ENCODE measurements at regions of chr19 and their contacts with region 1.

Region 1: DNA sequence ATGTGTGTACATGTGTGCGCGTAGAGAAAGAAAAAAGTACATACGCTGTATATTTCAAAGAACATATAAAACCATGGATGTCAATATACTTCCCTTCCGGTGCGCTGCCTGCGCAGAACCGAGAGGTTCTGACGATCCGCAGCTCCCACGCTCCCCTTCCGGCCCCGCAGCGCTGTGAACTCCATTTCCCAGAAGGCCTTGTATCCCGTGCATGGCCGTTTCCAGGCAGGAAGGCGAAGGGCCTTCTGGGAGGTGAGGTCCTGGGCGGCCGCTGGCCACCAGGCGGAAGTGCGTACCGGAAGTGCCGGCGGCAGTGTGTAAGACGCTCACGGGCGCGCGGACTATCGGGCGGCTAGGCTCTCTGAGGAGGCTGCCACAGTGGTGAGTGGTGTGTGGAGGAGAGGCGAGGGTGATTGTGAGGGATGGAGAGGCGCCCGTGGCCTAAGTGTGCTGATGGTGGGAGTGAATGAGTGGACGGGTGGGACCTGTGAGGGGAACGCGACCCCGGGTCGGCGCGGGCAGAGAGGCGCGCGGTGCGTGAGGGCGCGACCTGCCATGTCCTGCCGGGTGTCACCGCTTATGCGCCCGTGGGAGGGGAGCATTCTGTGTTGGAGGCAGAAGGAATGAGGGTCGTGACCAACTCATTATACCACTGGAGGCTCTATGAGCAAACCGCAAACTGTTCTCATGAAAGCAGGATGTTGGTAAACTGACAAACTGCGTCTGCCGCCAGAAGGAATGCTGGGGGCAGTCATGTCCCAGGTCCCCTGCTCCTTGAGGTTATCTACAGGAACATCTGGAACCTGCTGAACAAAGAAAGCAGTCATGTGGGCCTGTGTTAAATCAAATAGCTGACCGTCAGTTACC is at the start of gene ERVK3-1:
- DNase-seq: peak; percentile 97 to 98
- H3K4me3 ChIP-seq: peak within 1 kb of the TSS; percentile 78 to 91
- H3K27ac ChIP-seq: peak within 1 kb of the TSS; percentile 81 to 93
- H3K4me1 ChIP-seq: peaks cover 0 to 19% (median 10%) of the 10 kb centered on the region in 4 donors
- H3K27me3 ChIP-seq: no peaks in the 10 kb centered on the region
- CTCF ChIP-seq: peak; percentile 37 to 63

Region 2: DNA sequence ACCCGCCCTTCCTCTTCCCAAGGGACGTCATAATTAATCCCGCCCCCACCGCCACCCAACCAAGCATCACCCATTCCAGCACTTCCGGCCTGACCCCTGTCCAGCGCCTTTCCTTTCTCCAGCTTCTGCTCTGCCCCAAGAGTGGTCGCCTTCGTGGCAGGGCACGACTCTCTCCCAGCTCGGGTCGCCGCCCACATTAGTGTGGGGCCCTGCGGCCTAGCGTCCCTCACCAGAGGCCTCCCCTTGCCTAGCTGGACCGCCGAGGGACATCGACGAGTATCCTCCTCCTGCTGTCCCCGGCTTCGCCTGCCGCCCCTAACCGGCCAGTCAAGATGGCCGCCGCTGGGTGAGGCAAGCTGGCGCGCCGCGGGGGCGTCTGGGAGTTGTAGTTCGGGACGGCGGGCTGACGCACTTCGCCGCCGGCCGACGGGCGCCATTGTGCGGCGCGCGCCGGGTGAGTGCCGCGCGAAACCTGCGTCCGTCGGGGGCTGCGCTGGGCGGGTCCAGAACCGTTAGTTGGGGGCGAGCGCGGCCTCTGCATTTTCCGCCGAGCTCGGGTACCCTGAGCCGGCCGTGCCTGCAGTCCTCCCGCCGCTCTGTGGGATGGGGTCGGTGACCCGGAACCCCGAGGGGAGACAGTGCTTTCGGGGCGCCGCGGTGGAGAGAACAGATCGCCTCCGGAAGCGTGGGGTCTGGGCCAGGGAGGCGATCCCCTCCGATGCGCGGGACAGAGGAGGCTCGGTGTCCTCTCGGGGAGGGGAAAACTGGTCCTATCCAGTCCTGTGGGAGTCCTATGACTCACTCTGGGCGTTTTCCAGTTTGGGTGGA is 122.1 kb before region 1 on chr19 and contains the start of gene ZNF274:
- intact Hi-C with region 1: loop called (anchors 5 kb)
- DNase-seq: peak; percentile 87 to 94
- H3K4me3 ChIP-seq: peak within 1 kb of the TSS; percentile 71 to 88
- H3K27ac ChIP-seq: peak within 1 kb of the TSS; percentile 92 to 98
- H3K4me1 ChIP-seq: peaks cover 0 to 8% (median 4%) of the 10 kb centered on the region in 4 donors
- H3K27me3 ChIP-seq: no peaks in the 10 kb centered on the region
- CTCF ChIP-seq: no peak

Region 3: GRCh38 chr19:58278157-58279041 is 26.9 kb before region 1 on chr19 and contains the start of gene ZNF8:
- intact Hi-C with region 1: loop called (anchors 2 kb)
- DNase-seq: peak; percentile 96 to 98
- H3K4me3 ChIP-seq: peak within 1 kb of the TSS; percentile 77 to 95
- H3K27ac ChIP-seq: peak within 1 kb of the TSS; percentile 86 to 90
- H3K4me1 ChIP-seq: peaks cover 0 to 29% (median 8%) of the 10 kb centered on the region in 4 donors
- H3K27me3 ChIP-seq: no peaks in the 10 kb centered on the region
- CTCF ChIP-seq: no peak

Region 4: GRCh38 chr19:58326914-58327726 is 21.8 kb after region 1 on chr19 and contains the start of gene ZSCAN22:
- intact Hi-C with region 1: no loop called
- DNase-seq: peak; percentile 98
- H3K4me3 ChIP-seq: peak within 1 kb of the TSS; percentile 70 to 90
- H3K27ac ChIP-seq: peak within 1 kb of the TSS; percentile 94 to 97
- H3K4me1 ChIP-seq: peaks cover 0 to 31% (median 21%) of the 10 kb centered on the region in 4 donors
- H3K27me3 ChIP-seq: no peaks in the 10 kb centered on the region
- CTCF ChIP-seq: no peak